Sigmoid colon (tissue), 7 donors: ENCODE measurements at regions of chr2 and their contacts with region 1.

Region 1: DNA sequence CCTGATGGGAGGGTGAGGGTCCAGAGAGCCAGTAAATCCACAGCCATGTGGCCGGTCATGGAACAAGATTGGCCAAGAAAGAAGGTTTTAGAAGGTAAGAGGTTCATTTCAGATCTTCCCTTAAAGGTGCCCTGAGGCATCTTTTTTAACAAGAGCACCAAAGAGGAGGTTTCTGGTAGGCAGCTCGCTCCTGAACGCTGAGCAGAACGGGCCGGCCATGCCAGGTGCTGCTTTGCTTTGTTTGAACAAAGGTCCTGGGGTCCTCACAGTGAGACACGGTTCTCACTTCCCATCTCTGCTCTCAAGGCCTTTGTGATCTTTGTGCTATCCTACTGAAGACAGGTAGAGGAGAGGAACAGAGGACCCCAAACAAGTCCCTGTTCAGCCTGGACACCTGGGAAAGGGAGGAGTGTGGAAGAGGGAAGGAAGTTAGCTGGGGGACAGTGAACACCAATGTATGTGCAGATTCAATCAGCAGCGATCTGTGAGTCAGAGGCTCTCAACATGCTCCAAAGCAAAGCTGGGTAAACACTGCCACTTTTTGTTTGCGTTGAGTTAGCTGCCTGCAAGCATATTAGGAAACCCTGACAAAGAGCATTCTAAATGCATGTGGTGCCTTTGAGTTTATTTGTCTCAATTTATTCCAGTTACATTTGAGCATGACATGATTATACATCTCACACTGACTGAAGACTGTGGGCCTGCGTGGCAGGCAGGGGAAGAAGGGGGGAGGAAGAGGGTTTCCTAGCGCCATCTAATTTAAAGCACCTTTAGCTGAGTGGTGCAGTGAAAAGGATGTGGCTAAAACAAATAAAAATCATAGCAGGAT is 102.4 kb downstream of the ASB1 start:
- DNase-seq: no peak
- H3K4me3 ChIP-seq: no peak overlapping the region
- H3K27ac ChIP-seq: no peak overlapping the region
- H3K4me1 ChIP-seq: peaks cover 0 to 9% (median 2%) of the 10 kb centered on the region in 4 donors
- H3K27me3 ChIP-seq: no peaks in the 10 kb centered on the region
- CTCF ChIP-seq: no peak
- EP300 ChIP-seq: no peak
- POLR2A ChIP-seq: no peak

Region 2: GRCh38 chr2:238585836-238586821 is 57.0 kb after region 1 on chr2:
- intact Hi-C with region 1: loop called (anchors 5 kb)
- DNase-seq: peak; percentile 76
- H3K4me3 ChIP-seq: no peak overlapping the region
- H3K27ac ChIP-seq: peak overlapping the region in 2 of 4 donors; percentile 57 to 58
- H3K4me1 ChIP-seq: peaks cover 0 to 16% (median 10%) of the 10 kb centered on the region in 4 donors
- H3K27me3 ChIP-seq: no peaks in the 10 kb centered on the region
- CTCF ChIP-seq: no peak
- EP300 ChIP-seq: peak in 1 of 4 donors; percentile 48
- POLR2A ChIP-seq: no peak

Region 3: DNA sequence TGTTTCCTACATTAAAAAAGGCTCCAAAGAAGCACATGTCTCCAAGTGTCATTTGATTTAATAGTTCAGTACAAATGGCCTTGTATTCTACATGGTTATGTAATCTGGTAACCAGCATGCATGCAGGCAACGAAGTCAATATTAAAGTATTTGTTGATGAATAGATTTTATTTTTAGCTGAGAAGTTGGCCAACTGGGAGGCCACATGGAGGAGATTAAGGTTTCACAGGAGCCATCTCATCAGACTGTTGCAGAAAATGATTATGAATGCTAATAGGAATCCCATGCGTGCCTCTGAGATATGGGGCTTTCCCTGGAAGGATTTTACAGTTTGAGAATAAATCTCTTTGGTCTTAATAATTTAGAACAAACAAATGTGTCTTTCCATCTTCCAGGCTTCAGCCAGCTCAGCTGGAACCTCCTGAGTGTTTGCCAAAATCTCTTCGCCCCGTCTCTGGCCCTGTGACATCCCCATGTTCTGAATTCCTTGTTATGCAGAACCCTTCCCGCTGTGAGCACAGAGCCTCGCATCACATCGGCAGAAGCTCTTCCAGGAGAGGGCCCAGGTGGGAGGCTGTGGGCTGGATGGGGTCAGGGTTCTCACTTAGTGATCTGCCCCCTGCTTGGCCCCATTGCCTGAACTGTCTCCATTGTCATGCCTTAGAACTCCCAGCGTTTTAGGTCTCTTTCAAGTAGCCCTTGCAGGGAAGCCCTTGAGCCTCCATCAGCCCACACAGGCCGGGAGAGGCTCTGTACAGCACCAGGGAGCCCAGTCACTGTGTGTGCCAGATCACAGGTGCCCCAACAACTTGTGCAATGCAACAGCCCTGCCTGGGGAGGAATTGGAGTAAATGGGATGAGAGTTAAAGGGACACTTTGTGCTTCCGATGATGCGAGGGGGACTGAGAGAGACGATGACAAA is 128.2 kb after region 1 on chr2:
- intact Hi-C with region 1: no loop called
- DNase-seq: no peak
- H3K4me3 ChIP-seq: no peak overlapping the region
- H3K27ac ChIP-seq: peak overlapping the region in 1 of 4 donors; percentile 37
- H3K4me1 ChIP-seq: peaks cover 0 to 43% (median 27%) of the 10 kb centered on the region in 4 donors
- H3K27me3 ChIP-seq: no peaks in the 10 kb centered on the region
- CTCF ChIP-seq: no peak
- EP300 ChIP-seq: no peak
- POLR2A ChIP-seq: no peak